CD8-positive, alpha-beta T cell (primary cell): ENCODE measurements at regions of chrX and their contacts with region 1.

Region 1: DNA sequence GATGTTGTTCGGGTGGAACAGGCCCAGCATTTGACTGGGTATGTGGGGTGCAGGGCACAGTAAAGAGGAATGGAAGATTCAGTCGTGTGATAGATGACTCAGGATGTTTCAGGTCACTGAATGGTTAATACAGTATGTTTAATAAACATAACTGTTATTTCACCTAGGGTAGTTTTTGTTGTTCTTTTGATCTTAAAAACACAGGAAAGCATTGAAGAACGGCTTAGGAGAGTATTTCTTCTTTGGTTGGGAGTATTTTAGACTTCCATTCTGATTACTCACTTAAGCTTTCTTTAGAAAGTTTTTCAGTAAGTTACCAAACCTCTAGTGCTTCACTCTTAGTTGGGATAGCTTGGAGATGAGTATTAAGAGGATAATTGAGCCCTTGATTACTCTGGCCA is 62.3 kb downstream of the STAG2 start:
- DNase-seq: no peak
- ATAC-seq: no peak
- H3K4me3 ChIP-seq: no peak overlapping the region
- H3K4me3 Mint-ChIP-seq: no peak overlapping the region
- H3K27ac ChIP-seq: no peak overlapping the region
- H3K27ac Mint-ChIP-seq: peak overlapping the region; percentile 78
- H3K4me1 ChIP-seq: peaks cover 5% of the 10 kb centered on the region
- H3K4me1 Mint-ChIP-seq: peaks cover 22% of the 10 kb centered on the region
- H3K27me3 ChIP-seq: no peaks in the 10 kb centered on the region
- H3K27me3 Mint-ChIP-seq: no peaks in the 10 kb centered on the region
- CTCF ChIP-seq: no peak

Region 2: DNA sequence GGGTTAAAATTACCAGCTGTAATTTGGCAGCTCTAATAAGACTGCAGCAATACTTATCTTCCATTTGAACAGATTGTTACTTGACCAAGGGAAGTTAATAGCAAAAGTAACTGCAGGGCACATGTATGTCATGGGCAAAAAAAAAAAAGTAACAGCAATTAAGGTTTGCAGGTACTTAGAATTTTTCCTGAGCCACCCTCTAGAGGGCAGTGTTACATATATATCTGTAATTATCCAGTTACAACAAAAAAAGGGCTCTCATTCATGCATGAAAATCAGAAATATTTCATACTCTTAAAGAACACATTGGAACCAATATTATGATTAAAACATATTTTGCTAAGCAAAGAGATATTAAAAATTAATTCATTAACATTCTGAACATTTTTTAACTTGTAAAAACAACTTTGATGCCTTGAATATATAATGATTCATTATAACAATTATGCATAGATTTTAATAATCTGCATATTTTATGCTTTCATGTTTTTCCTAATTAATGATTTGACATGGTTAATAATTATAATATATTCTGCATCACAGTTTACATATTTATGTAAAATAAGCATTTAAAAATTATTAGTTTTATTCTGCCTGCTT is 138.9 kb before region 1 on chrX:
- CTCF ChIA-PET with region 1: no interaction called
- POLR2A ChIA-PET with region 1: no interaction called
- intact Hi-C with region 1: loop called in 1 of 2 experiments (anchors 10 kb)
- DNase-seq: peak in 6 of 9 experiments; percentile 0 to 73 (median 28)
- ATAC-seq: peak; percentile 34
- H3K4me3 ChIP-seq: no peak overlapping the region
- H3K4me3 Mint-ChIP-seq: no peak overlapping the region
- H3K27ac ChIP-seq: no peak overlapping the region
- H3K27ac Mint-ChIP-seq: no peak overlapping the region
- H3K4me1 ChIP-seq: no peaks in the 10 kb centered on the region
- H3K4me1 Mint-ChIP-seq: peaks cover 12% of the 10 kb centered on the region
- H3K27me3 ChIP-seq: no peaks in the 10 kb centered on the region
- H3K27me3 Mint-ChIP-seq: no peaks in the 10 kb centered on the region
- CTCF ChIP-seq: peak; percentile 49